Common myeloid progenitor, CD34-positive (primary cell): ENCODE measurements at regions of chr21 and their contacts with region 1.

Region 1: DNA sequence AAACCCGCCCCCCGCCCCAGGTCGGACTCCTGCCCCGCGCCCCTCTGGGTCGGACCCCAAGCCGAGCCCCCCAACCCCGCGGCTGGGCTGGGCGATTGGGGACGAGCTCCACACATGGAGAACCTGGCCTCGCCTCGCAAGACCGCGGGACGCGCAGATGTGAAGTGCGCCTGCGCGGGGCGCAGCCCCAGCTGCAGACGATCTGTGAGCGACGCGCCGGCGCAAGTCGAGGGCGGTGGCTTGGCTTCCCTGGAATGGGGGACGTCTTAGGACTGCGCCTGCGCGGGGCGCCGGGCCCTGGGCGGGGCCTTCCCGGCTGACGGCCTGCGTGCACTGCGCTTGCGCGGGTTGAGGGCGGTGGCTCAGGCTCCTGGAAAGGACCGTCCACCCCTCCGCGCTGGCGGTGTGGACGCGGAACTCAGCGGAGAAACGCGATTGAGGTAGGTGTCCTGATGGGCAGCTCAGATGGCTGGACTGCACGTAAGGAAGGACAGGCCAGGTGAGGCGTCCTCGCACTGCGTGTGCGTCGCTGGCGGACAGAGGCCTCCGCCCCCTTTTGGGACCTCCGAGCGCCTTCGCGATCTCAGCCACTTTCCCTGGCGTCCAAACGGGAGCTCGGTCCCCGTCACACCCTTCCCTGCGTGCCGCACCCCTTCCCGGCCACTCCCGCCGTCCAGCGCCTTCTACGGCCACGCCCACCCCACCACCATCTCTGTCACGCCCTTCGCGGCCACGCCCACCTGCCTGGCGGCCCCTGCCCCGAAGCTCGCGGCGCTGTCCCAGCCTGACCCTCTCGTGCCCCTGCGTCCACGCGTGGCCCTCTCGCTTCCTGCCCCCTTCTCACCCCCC is at the start of gene PRMT2:
- DNase-seq: peak; percentile 96 to 98 (median 97)
- H3K4me3 ChIP-seq: peak within 1 kb of the TSS; percentile 85 to 100 (median 100)
- H3K27ac ChIP-seq: peak within 1 kb of the TSS; percentile 88 to 94
- H3K4me1 ChIP-seq: peaks cover 16 to 50% (median 35%) of the 10 kb centered on the region in 4 experiments
- H3K27me3 ChIP-seq: no peaks in the 10 kb centered on the region

Region 2: GRCh38 chr21:46551636-46552241 is 83.8 kb before region 1 on chr21:
- CTCF ChIA-PET with region 1: interaction called, 27 read pairs
- POLR2A ChIA-PET with region 1: interaction called, 5 read pairs
- DNase-seq: peak; percentile 31 to 75 (median 62)
- H3K4me3 ChIP-seq: peak overlapping the region in 5 of 7 experiments; percentile 51 to 77 (median 60)
- H3K27ac ChIP-seq: peak overlapping the region; percentile 34 to 79
- H3K4me1 ChIP-seq: peaks cover 7 to 34% (median 24%) of the 10 kb centered on the region in 4 experiments
- H3K27me3 ChIP-seq: no peaks in the 10 kb centered on the region

Region 3: DNA sequence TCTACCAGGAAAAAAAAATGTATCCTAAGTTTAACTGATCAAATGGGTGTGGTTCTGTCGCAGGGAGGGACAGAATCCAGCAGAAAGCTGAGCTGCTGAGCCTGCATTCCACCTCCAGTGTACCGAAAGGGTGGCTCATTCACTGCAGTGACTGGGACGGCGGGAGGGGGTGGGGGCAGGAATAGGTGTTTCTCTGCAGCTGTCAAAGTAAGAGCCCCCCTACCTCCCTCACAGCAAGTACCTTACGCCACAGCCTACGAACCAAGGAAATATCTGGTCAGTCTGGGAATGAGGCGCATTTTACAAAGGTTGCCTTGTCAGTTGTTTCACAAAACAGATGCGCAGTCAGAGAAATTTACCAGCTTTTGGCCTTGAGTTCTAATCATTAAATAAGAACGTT is 32.3 kb before region 1 on chr21:
- CTCF ChIA-PET with region 1: interaction called, 12 read pairs
- POLR2A ChIA-PET with region 1: interaction called, 4 read pairs
- DNase-seq: no peak
- H3K4me3 ChIP-seq: no peak overlapping the region
- H3K27ac ChIP-seq: no peak overlapping the region
- H3K4me1 ChIP-seq: peaks cover 8 to 62% (median 38%) of the 10 kb centered on the region in 4 experiments
- H3K27me3 ChIP-seq: no peaks in the 10 kb centered on the region

Region 4: DNA sequence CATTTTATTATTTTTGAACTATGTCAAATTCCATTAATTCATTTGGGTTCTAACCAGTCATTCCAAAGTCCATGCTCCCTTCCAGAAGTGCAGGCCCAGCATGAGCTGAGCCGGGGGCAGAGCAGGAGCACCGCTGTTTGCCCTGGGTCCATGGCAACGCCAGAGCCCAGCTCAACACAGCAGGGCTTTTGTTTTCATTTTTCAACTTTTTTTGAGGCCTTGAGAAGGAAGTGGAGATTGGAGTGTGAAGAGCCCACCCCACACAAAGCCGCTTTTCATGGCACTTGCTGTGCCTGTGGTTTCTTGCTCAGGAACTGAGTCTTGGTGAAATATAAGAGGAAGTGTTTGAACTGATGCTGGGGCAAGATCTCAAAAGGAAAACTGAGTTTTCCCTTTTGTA is 13.3 kb before region 1 on chr21:
- CTCF ChIA-PET with region 1: interaction called, 25 read pairs
- POLR2A ChIA-PET with region 1: interaction called, 11 read pairs
- DNase-seq: peak; percentile 93 to 98 (median 97)
- H3K4me3 ChIP-seq: peak overlapping the region in 2 of 7 experiments; percentile 37 to 60
- H3K27ac ChIP-seq: peak overlapping the region; percentile 90 to 96
- H3K4me1 ChIP-seq: peaks cover 3 to 48% (median 31%) of the 10 kb centered on the region in 4 experiments
- H3K27me3 ChIP-seq: no peaks in the 10 kb centered on the region

Region 5: DNA sequence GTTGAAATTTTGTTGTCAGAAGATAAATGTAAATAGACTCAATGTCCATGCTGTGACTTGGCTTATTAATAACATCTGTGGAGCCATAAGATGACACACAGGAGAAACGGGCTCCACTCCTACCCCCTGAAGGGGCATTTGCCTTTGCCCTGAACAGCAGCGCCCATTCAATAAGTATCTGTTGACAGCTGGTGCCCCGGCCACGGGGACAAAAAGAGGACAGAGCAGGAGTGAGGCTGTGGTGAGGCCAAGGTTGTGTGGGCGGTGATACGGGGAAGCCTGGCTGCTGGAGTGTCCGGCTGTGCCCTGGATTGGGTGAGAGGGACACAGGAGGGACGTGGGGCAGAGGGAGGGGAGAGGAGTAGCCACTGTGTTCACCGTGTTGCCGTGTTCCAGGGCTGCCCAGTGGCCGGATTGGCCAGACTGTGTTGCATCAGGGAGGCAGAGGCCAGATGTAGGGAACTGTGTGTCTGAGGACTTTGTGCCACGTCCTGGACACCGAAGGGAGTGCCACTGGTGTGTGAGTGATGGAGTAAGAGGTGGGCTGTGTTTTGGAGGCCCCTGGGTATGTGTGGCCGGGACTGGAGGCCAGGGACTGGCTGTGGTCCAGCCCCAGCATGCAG is 15.0 kb after region 1 on chr21:
- CTCF ChIA-PET with region 1: no interaction called
- POLR2A ChIA-PET with region 1: no interaction called
- DNase-seq: no peak
- H3K4me3 ChIP-seq: no peak overlapping the region
- H3K27ac ChIP-seq: no peak overlapping the region
- H3K4me1 ChIP-seq: no peaks in the 10 kb centered on the region
- H3K27me3 ChIP-seq: no peaks in the 10 kb centered on the region